Caco-2 (cell line): ENCODE measurements at regions of chr12 and their contacts with region 1.

Region 1: GRCh38 chr12:133130038-133130807 is at the starts of genes ZNF10 and ZNF891:
- DNase-seq: peak; percentile 97 to 98
- H3K4me3 ChIP-seq: peak within 1 kb of the TSS; percentile 99
- H3K4me3 Mint-ChIP-seq: peak within 1 kb of the TSS; percentile 97
- H3K27ac Mint-ChIP-seq: peak within 1 kb of the TSS; percentile 98
- H3K4me1 ChIP-seq: no peaks in the 10 kb centered on the region; the same call in 1 of the 2 replicates
- H3K4me1 Mint-ChIP-seq: no peaks in the 10 kb centered on the region
- H3K27me3 ChIP-seq: no peaks in the 10 kb centered on the region
- H3K27me3 Mint-ChIP-seq: no peaks in the 10 kb centered on the region
- CTCF ChIP-seq: no peak
- total RNA-seq, gene ZNF10: 6.9 and 7.6 TPM in 2 replicates
- total RNA-seq, gene ZNF891: 2.0 and 2.3 TPM in 2 replicates

Region 2: GRCh38 chr12:132285991-132286681 is 844.1 kb before region 1 on chr12:
- CTCF ChIA-PET with region 1: no interaction called
- POLR2A ChIA-PET with region 1: no interaction called
- intact Hi-C with region 1: no loop called
- DNase-seq: no peak
- H3K4me3 ChIP-seq: no peak overlapping the region
- H3K4me3 Mint-ChIP-seq: no peak overlapping the region
- H3K27ac Mint-ChIP-seq: no peak overlapping the region
- H3K4me1 ChIP-seq: no peaks in the 10 kb centered on the region
- H3K4me1 Mint-ChIP-seq: no peaks in the 10 kb centered on the region
- H3K27me3 ChIP-seq: no peaks in the 10 kb centered on the region
- H3K27me3 Mint-ChIP-seq: peaks cover 4% of the 10 kb centered on the region
- CTCF ChIP-seq: no peak

Region 3: GRCh38 chr12:132724506-132725241 is 405.5 kb before region 1 on chr12:
- CTCF ChIA-PET with region 1: no interaction called
- POLR2A ChIA-PET with region 1: no interaction called
- intact Hi-C with region 1: no loop called
- DNase-seq: no peak
- H3K4me3 ChIP-seq: no peak overlapping the region
- H3K4me3 Mint-ChIP-seq: no peak overlapping the region
- H3K27ac Mint-ChIP-seq: no peak overlapping the region
- H3K4me1 ChIP-seq: no peaks in the 10 kb centered on the region
- H3K4me1 Mint-ChIP-seq: no peaks in the 10 kb centered on the region
- H3K27me3 ChIP-seq: no peaks in the 10 kb centered on the region
- H3K27me3 Mint-ChIP-seq: no peaks in the 10 kb centered on the region
- CTCF ChIP-seq: no peak

Region 4: GRCh38 chr12:132956011-132956788 is 174.0 kb before region 1 on chr12 and contains the start of gene ZNF605:
- CTCF ChIA-PET with region 1: no interaction called
- POLR2A ChIA-PET with region 1: no interaction called
- intact Hi-C with region 1: no loop called
- DNase-seq: peak; percentile 89 to 90
- H3K4me3 ChIP-seq: peak within 1 kb of the TSS; percentile 49
- H3K4me3 Mint-ChIP-seq: peak within 1 kb of the TSS; percentile 83
- H3K27ac Mint-ChIP-seq: peak within 1 kb of the TSS; percentile 83
- H3K4me1 ChIP-seq: no peaks in the 10 kb centered on the region
- H3K4me1 Mint-ChIP-seq: peaks cover 11% of the 10 kb centered on the region
- H3K27me3 ChIP-seq: no peaks in the 10 kb centered on the region
- H3K27me3 Mint-ChIP-seq: no peaks in the 10 kb centered on the region
- CTCF ChIP-seq: peak in 1 of 2 experiments; percentile 11
- total RNA-seq, gene ZNF605: 7.1 and 7.5 TPM in 2 replicates

Region 5: DNA sequence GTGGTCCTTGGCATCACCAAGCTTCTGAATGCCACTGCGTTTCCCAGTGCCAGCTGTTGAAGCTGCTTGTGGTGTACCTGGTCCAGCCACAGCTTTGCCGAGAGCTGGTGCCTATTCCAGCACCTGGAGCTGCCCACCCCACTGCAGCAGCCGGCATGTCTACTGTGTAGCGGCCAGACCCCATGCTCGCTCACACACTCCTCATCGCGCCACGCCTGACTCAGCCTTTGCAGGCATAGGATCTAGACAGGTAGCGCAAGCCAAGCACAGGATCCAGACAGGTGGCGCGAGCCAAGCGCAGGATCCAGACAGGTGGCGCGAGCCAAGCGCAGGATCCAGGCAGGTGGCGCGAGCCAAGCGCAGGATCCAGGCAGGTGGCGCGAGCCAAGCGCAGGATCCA is 162.5 kb before region 1 on chr12:
- CTCF ChIA-PET with region 1: no interaction called
- POLR2A ChIA-PET with region 1: no interaction called
- intact Hi-C with region 1: no loop called
- DNase-seq: no peak
- H3K4me3 ChIP-seq: no peak overlapping the region
- H3K4me3 Mint-ChIP-seq: no peak overlapping the region
- H3K27ac Mint-ChIP-seq: no peak overlapping the region
- H3K4me1 ChIP-seq: no peaks in the 10 kb centered on the region
- H3K4me1 Mint-ChIP-seq: no peaks in the 10 kb centered on the region
- H3K27me3 ChIP-seq: no peaks in the 10 kb centered on the region
- H3K27me3 Mint-ChIP-seq: no peaks in the 10 kb centered on the region
- CTCF ChIP-seq: no peak

Region 6: DNA sequence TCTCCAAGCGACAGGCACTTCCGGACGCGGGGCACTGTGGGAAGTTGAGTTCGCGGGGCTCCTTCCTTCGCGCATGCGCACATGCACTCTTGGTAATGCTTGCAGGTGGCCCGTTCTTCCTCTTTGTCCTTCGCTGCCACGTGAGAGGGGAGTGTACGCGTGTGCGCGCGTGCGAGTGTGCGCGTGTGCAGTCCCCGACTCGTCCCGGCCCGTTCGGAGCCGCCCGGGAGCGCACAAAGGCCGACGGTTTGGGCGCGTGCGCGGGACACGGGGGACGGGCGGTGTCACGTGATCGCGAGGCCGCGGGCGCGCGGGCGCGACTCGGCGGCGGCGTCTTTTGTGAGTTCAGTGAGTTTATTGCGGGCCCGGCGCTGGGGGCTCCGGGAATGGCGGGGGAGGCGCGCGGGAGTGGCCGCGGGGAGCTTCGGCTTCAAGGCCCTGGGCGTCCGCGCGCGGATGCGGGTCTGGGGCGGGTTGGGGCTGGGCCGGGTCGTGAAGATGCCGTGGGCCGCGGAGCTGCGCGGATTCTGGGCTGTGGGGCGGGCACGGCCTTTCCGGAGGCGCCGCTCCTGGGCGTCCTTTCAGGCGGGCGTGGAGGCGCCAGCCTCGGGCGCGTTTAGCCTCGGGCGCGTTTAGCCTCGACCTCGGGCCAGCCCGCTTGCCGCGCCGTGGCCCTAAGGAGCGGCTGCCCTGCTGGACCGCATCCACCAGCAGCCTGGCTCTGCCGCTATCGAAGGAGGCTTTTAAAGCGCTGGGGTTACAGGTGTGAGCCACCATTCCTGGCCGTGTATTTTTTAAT is 92.8 kb before region 1 on chr12 and contains the start of gene ZNF84:
- CTCF ChIA-PET with region 1: no interaction called
- POLR2A ChIA-PET with region 1: no interaction called
- intact Hi-C with region 1: loop called (anchors 1 kb)
- DNase-seq: peak; percentile 96 to 97
- H3K4me3 ChIP-seq: peak within 1 kb of the TSS; percentile 92
- H3K4me3 Mint-ChIP-seq: peak within 1 kb of the TSS; percentile 90
- H3K27ac Mint-ChIP-seq: peak within 1 kb of the TSS; percentile 97
- H3K4me1 ChIP-seq: no peaks in the 10 kb centered on the region
- H3K4me1 Mint-ChIP-seq: no peaks in the 10 kb centered on the region
- H3K27me3 ChIP-seq: no peaks in the 10 kb centered on the region
- H3K27me3 Mint-ChIP-seq: no peaks in the 10 kb centered on the region
- CTCF ChIP-seq: no peak
- total RNA-seq, gene ZNF84: 21.8 and 24.9 TPM in 2 replicates

Region 7: GRCh38 chr12:133181238-133181959 is 51.2 kb after region 1 on chr12 and contains the start of gene ZNF268:
- CTCF ChIA-PET with region 1: interaction called, 6 read pairs
- POLR2A ChIA-PET with region 1: no interaction called
- intact Hi-C with region 1: loop called (anchors 1 kb)
- DNase-seq: peak; percentile 94 to 96
- H3K4me3 ChIP-seq: peak within 1 kb of the TSS; percentile 83
- H3K4me3 Mint-ChIP-seq: peak within 1 kb of the TSS; percentile 97
- H3K27ac Mint-ChIP-seq: peak within 1 kb of the TSS; percentile 99
- H3K4me1 ChIP-seq: peaks cover 7% of the 10 kb centered on the region
- H3K4me1 Mint-ChIP-seq: no peaks in the 10 kb centered on the region
- H3K27me3 ChIP-seq: no peaks in the 10 kb centered on the region
- H3K27me3 Mint-ChIP-seq: no peaks in the 10 kb centered on the region
- CTCF ChIP-seq: peak; percentile 79 to 94
- total RNA-seq, gene ZNF268: 24.1 and 32.0 TPM in 2 replicates